Naive thymus-derived CD4-positive, alpha-beta T cell (primary cell): ENCODE measurements at regions of chr2 and their contacts with region 1.

Region 1: DNA sequence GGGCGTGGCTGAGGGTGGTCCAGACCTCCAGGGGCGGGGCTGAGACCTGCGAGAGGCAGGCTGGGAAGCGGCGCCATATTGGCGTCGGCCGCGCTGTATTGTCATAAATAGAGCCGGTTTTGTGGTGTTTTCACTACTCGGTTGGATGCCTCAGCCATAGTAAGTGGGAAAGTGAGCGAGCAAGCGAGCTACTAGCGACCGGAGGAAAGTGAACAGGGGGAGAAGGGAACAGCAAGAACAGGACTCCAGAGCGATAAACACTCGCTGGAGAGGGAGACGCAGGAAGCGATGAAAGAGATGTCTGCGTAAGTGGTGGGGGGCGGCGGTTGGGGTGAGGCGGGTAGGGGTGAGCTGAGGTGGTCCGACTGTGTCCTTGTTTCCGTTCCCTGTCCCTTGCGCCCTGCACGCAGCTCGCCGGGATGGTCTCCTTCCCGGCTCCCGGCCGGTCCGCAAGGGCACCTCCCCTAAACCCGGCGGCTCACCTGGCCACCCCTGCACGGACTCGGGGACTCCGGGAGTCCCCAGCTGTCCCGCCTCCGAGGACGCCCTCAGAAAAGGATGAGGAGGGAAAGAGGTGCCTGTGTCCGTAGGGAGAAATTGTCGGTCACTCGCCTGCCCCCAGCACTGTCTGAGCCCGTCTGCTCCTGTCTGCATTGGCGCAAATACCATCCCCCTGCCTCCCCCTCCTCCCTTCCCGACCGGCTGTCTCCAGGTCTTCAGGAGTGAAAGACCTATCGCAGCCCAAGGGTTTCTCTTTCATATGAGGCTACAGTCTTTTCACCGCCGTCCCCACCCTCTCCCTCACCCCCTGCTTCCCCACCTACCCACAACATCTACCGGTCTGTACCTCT is at the start of gene PAPOLG:
- DNase-seq: peak; percentile 90 to 97 (median 93)
- ATAC-seq: peak; percentile 100
- H3K4me3 ChIP-seq: peak within 1 kb of the TSS; percentile 86
- H3K4me3 Mint-ChIP-seq: peak within 1 kb of the TSS; percentile 94 to 100 (median 98)
- H3K27ac ChIP-seq: peak within 1 kb of the TSS; percentile 85
- H3K27ac Mint-ChIP-seq: peak within 1 kb of the TSS; percentile 94 to 100 (median 98)
- H3K4me1 ChIP-seq: peaks cover 0 to 13% of the 10 kb centered on the region in 2 donors
- H3K4me1 Mint-ChIP-seq: peaks cover 24 to 53% (median 46%) of the 10 kb centered on the region in 7 donors
- H3K27me3 ChIP-seq: no peaks in the 10 kb centered on the region
- H3K27me3 Mint-ChIP-seq: no peaks in the 10 kb centered on the region
- total RNA-seq, gene PAPOLG: 15.1 to 42.4 (median 22.9) TPM

Region 2: GRCh38 chr2:59888015-59888414 is 868.4 kb before region 1 on chr2:
- CTCF ChIA-PET with region 1: no interaction called
- POLR2A ChIA-PET with region 1: interaction called, 3 read pairs
- intact Hi-C with region 1: loop called in 1 of 2 experiments (anchors 5 kb)
- DNase-seq: peak in 8 of 9 donors; percentile 22 to 90 (median 86)
- ATAC-seq: peak; percentile 97
- H3K4me3 ChIP-seq: no peak overlapping the region
- H3K4me3 Mint-ChIP-seq: peak overlapping the region; percentile 3 to 85 (median 72)
- H3K27ac ChIP-seq: peak overlapping the region; percentile 54
- H3K27ac Mint-ChIP-seq: peak overlapping the region; percentile 29 to 92 (median 85)
- H3K4me1 ChIP-seq: peaks cover 0 to 38% of the 10 kb centered on the region in 2 donors
- H3K4me1 Mint-ChIP-seq: peaks cover 28 to 74% (median 57%) of the 10 kb centered on the region in 7 donors
- H3K27me3 ChIP-seq: no peaks in the 10 kb centered on the region
- H3K27me3 Mint-ChIP-seq: peaks cover 0 to 16% (median 0%) of the 10 kb centered on the region in 5 donors

Region 3: DNA sequence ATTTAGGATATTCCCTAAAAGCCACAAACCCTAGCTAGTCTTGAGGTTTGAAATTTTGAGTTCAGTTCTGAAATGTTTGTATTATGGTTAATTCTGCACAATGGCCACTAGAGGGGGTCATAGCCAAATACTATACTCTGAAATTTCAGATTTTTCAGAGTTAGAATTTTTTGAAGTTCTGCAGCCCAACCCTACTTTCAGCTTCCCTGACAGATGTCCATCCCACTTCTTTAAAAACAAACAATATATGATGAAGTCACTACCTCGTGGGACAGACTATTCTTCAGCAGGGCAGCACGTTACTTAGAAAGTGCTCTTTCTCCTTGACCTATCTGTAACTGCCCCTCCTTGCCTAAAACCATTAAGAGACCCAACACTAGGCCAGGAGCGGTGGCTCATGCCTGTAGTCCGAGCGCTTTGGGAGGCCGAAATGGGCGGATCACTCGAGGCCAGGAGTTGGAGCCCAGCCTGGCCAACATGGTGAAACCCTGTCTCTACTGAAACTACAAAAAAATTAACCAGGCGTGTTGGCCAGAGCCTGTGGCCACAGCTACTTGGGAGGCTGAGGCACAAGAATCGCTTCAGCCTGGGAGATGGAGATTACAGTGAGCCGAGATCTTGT is 48.6 kb before region 1 on chr2:
- CTCF ChIA-PET with region 1: interaction called, 4 read pairs
- POLR2A ChIA-PET with region 1: interaction called, 4 read pairs
- intact Hi-C with region 1: loop called (anchors 1 kb)
- DNase-seq: peak in 6 of 9 donors; percentile 8 to 47 (median 34)
- ATAC-seq: peak; percentile 65
- H3K4me3 ChIP-seq: no peak overlapping the region
- H3K4me3 Mint-ChIP-seq: no peak overlapping the region
- H3K27ac ChIP-seq: no peak overlapping the region
- H3K27ac Mint-ChIP-seq: peak overlapping the region in 2 of 9 donors; percentile 4 to 39
- H3K4me1 ChIP-seq: no peaks in the 10 kb centered on the region
- H3K4me1 Mint-ChIP-seq: no peaks in the 10 kb centered on the region
- H3K27me3 ChIP-seq: no peaks in the 10 kb centered on the region
- H3K27me3 Mint-ChIP-seq: peaks cover 0 to 7% (median 0%) of the 10 kb centered on the region in 5 donors

Region 4: DNA sequence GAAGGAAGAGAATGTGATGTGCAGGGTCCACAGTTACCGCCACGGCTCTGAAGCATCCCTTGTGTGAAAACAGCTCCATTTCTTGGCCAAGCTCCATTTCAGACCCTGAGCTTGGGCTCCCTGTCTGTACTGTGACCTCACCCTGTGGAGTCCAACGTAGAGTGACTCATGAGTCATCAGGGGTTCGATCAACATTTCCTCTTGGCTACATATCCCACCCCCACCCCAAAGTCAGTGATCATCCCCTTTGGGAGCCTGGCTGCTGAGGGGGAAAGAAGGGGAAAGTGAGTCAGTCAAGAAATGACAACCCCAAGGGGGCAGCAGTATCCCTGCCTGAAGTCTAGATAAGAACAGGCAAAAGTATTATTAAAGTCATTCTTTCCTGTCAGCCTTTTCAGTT is 61.9 kb after region 1 on chr2:
- CTCF ChIA-PET with region 1: interaction called, 4 read pairs
- POLR2A ChIA-PET with region 1: interaction called, 4 read pairs
- intact Hi-C with region 1: loop called (anchors 1 to 2 kb)
- DNase-seq: peak in 2 of 9 donors; percentile 29 to 53
- ATAC-seq: no peak
- H3K4me3 ChIP-seq: no peak overlapping the region
- H3K4me3 Mint-ChIP-seq: peak overlapping the region in 2 of 10 donors; percentile 5 to 34
- H3K27ac ChIP-seq: no peak overlapping the region
- H3K27ac Mint-ChIP-seq: peak overlapping the region in 7 of 9 donors; percentile 28 to 92 (median 61)
- H3K4me1 ChIP-seq: peaks cover 24% of the 10 kb centered on the region in 2 donors
- H3K4me1 Mint-ChIP-seq: peaks cover 22 to 46% (median 37%) of the 10 kb centered on the region in 7 donors
- H3K27me3 ChIP-seq: no peaks in the 10 kb centered on the region
- H3K27me3 Mint-ChIP-seq: peaks cover 0 to 3% (median 0%) of the 10 kb centered on the region in 5 donors

Region 5: DNA sequence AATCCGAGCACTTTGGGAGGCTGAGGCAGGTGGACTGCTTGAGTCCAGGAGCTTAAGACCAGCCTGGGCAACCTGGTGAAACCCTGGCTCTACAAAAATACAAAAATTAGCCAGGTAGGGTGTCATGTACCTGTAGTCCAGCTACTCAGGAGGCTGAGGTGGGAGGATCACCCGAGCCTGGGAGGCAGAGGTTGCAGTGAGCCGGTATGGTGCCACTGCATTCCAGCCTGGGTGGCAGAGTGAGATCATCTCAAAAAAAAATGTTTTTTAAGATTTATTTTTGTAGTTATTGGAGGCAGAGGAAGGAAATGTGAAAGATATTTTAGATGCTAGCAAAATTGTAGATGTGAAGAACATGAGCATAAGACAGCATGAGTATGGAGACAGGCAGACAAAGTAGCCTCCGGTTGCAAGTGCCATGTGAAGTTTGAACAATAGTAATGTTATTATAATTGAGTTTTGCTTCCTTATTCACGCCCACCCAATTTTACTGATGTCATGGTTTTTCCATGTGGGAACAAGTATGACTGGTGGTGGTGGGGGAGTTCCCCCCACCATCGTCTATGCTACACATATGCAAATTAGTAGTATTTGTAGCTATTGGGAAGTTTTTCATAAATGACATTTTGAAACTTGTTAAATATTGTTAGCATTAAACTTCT is 142.9 kb after region 1 on chr2:
- CTCF ChIA-PET with region 1: no interaction called
- POLR2A ChIA-PET with region 1: no interaction called
- intact Hi-C with region 1: no loop called
- DNase-seq: peak in 1 of 9 donors; percentile 54
- ATAC-seq: peak; percentile 19
- H3K4me3 ChIP-seq: no peak overlapping the region
- H3K4me3 Mint-ChIP-seq: no peak overlapping the region
- H3K27ac ChIP-seq: no peak overlapping the region
- H3K27ac Mint-ChIP-seq: peak overlapping the region in 3 of 9 donors; percentile 52 to 82 (median 69)
- H3K4me1 ChIP-seq: peaks cover 0 to 3% of the 10 kb centered on the region in 2 donors
- H3K4me1 Mint-ChIP-seq: peaks cover 2 to 24% (median 9%) of the 10 kb centered on the region in 7 donors
- H3K27me3 ChIP-seq: no peaks in the 10 kb centered on the region
- H3K27me3 Mint-ChIP-seq: no peaks in the 10 kb centered on the region

Region 6: DNA sequence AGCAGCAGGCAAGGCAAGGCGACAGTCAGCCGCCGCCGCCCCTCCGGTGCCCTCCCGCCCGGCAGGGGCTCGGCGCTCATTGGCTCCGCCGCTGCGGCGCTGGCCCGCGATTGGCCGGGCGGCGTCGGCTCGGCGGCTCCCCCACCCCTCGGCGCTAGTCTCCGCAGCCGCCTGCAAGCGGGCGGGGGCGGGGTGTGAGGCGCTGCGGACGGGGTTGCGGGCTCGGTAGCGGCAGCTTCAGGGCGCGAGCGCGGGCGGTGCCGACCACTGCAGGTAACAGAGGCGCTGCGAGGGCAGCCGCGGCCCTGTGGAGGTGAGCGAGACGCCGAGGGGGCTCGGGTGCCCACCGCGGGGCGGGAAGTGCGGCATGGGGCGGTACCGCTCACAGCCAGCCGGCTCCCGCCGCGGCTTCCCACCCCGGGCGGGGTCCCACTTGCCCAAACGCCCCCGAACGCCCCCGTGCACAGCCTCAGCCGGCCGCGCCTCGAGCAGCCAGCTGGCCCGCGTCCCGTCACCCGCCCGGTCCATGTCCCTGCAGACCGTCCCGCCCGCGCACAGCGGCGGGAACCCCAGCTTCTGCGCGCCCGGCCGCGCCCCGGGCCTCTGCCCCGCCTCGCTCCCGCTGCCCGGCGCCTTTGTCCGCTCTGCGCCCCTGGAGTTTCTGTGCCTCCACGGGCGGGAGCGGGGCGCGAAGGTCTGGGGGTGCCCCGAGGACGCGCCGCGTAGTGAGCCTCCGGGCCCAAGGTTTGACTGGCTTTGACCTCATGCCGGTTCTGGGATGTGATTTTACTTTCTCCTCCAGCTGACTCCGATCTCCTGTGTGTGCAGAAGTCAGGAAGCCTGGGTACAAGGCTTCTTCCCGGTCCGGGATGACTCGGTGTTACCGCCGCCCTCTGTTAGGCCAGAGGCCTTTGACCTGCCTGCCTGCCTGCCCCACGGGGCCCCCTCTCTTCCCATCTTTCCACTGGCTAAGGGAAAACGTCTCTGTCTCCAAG is 309.6 kb after region 1 on chr2 and contains the start of gene SANBR:
- CTCF ChIA-PET with region 1: no interaction called
- POLR2A ChIA-PET with region 1: no interaction called
- intact Hi-C with region 1: loop called (anchors 1 kb)
- DNase-seq: peak; percentile 78 to 90 (median 83)
- ATAC-seq: peak; percentile 99
- H3K4me3 ChIP-seq: peak within 1 kb of the TSS; percentile 59
- H3K4me3 Mint-ChIP-seq: peak within 1 kb of the TSS; percentile 79 to 98 (median 95)
- H3K27ac ChIP-seq: peak within 1 kb of the TSS; percentile 49
- H3K27ac Mint-ChIP-seq: peak within 1 kb of the TSS; percentile 12 to 94 (median 79)
- H3K4me1 ChIP-seq: peaks cover 0 to 6% of the 10 kb centered on the region in 2 donors
- H3K4me1 Mint-ChIP-seq: peaks cover 0 to 17% (median 5%) of the 10 kb centered on the region in 7 donors
- H3K27me3 ChIP-seq: no peaks in the 10 kb centered on the region
- H3K27me3 Mint-ChIP-seq: peaks cover 0 to 2% (median 0%) of the 10 kb centered on the region in 5 donors
- total RNA-seq, gene SANBR: 2.0 to 5.9 (median 3.6) TPM

Region 7: GRCh38 chr2:61255580-61256437 is 499.4 kb after region 1 on chr2:
- CTCF ChIA-PET with region 1: no interaction called
- POLR2A ChIA-PET with region 1: no interaction called
- intact Hi-C with region 1: no loop called
- DNase-seq: no peak
- ATAC-seq: peak; percentile 45
- H3K4me3 ChIP-seq: no peak overlapping the region
- H3K4me3 Mint-ChIP-seq: no peak overlapping the region
- H3K27ac ChIP-seq: no peak overlapping the region
- H3K27ac Mint-ChIP-seq: no peak overlapping the region
- H3K4me1 ChIP-seq: no peaks in the 10 kb centered on the region
- H3K4me1 Mint-ChIP-seq: peaks cover 0 to 6% (median 3%) of the 10 kb centered on the region in 7 donors
- H3K27me3 ChIP-seq: no peaks in the 10 kb centered on the region
- H3K27me3 Mint-ChIP-seq: no peaks in the 10 kb centered on the region

Region 8: GRCh38 chr2:61470965-61471904 is 714.8 kb after region 1 on chr2 and contains the start of gene USP34:
- CTCF ChIA-PET with region 1: no interaction called
- POLR2A ChIA-PET with region 1: no interaction called
- intact Hi-C with region 1: loop called (anchors 1 kb)
- DNase-seq: peak; percentile 77 to 93 (median 88)
- ATAC-seq: peak; percentile 91
- H3K4me3 ChIP-seq: peak within 1 kb of the TSS; percentile 97
- H3K4me3 Mint-ChIP-seq: peak within 1 kb of the TSS; percentile 85 to 99 (median 96)
- H3K27ac ChIP-seq: peak within 1 kb of the TSS; percentile 98
- H3K27ac Mint-ChIP-seq: peak within 1 kb of the TSS; percentile 96 to 99 (median 97)
- H3K4me1 ChIP-seq: peaks cover 14 to 27% of the 10 kb centered on the region in 2 donors
- H3K4me1 Mint-ChIP-seq: peaks cover 11 to 45% (median 33%) of the 10 kb centered on the region in 7 donors
- H3K27me3 ChIP-seq: no peaks in the 10 kb centered on the region
- H3K27me3 Mint-ChIP-seq: no peaks in the 10 kb centered on the region
- total RNA-seq, gene USP34: 109 to 186 (median 165) TPM

Region 9: GRCh38 chr2:61854474-61855182 is 1098.2 kb after region 1 on chr2:
- CTCF ChIA-PET with region 1: no interaction called
- POLR2A ChIA-PET with region 1: no interaction called
- intact Hi-C with region 1: loop called in 1 of 2 experiments (anchors 5 kb)
- DNase-seq: peak; percentile 61 to 96 (median 94)
- ATAC-seq: peak; percentile 95
- H3K4me3 ChIP-seq: peak overlapping the region; percentile 100
- H3K4me3 Mint-ChIP-seq: peak overlapping the region; percentile 92 to 99 (median 96)
- H3K27ac ChIP-seq: peak overlapping the region; percentile 77
- H3K27ac Mint-ChIP-seq: peak overlapping the region; percentile 90 to 98 (median 95)
- H3K4me1 ChIP-seq: peaks cover 4 to 6% of the 10 kb centered on the region in 2 donors
- H3K4me1 Mint-ChIP-seq: peaks cover 10 to 27% (median 17%) of the 10 kb centered on the region in 7 donors
- H3K27me3 ChIP-seq: no peaks in the 10 kb centered on the region
- H3K27me3 Mint-ChIP-seq: no peaks in the 10 kb centered on the region